Psoas muscle (tissue), 8 donors: ENCODE measurements at regions of chr20 and their contacts with region 1.

Region 1: DNA sequence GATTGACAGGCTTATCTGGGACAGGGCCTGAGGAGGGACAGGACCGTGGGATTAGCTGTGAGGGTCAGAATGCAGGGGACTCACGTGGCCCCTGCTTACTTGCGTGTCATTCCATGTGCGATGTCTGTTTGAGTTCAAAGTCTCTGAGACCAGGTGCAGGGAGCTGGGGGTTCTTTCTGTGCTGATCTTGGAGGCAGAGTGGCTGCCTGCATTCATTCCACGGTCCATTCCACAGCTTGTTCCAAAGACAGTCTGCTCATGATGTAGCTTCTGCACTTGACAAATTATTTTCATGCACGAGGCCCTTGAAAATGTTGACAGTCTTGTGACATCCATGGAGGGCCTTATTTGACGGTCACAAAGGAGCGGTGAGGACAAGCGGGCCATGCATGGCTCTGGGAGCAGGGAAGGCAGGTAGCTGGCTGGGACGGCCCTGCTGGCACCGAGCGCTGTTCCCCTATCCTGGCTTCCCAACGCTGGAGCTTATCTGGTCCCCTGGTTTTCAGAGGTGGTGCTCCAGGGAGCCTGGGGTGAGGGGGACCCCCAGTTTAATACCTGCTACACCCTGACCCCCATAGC is 156.3 kb upstream of the RNF24 start:
- DNase-seq: no peak
- ATAC-seq: peak in 2 of 4 donors; percentile 1 to 4
- H3K4me3 ChIP-seq: peak overlapping the region; percentile 64
- H3K27ac ChIP-seq: peak overlapping the region; percentile 36
- H3K4me1 ChIP-seq: peaks cover 6% of the 10 kb centered on the region
- H3K27me3 ChIP-seq: no peaks in the 10 kb centered on the region
- CTCF ChIP-seq: no peak

Region 2: GRCh38 chr20:4108495-4109306 is 62.9 kb before region 1 on chr20:
- intact Hi-C with region 1: loop called in 1 of 2 experiments (anchors 1 kb)
- DNase-seq: peak; percentile 47 to 68
- ATAC-seq: peak; percentile 83 to 96 (median 90)
- H3K4me3 ChIP-seq: no peak overlapping the region
- H3K27ac ChIP-seq: no peak overlapping the region
- H3K4me1 ChIP-seq: peaks cover 6% of the 10 kb centered on the region
- H3K27me3 ChIP-seq: no peaks in the 10 kb centered on the region
- CTCF ChIP-seq: peak; percentile 95